MCF 10A (cell line): ENCODE measurements at regions of chr6 and their contacts with region 1.

Region 1: DNA sequence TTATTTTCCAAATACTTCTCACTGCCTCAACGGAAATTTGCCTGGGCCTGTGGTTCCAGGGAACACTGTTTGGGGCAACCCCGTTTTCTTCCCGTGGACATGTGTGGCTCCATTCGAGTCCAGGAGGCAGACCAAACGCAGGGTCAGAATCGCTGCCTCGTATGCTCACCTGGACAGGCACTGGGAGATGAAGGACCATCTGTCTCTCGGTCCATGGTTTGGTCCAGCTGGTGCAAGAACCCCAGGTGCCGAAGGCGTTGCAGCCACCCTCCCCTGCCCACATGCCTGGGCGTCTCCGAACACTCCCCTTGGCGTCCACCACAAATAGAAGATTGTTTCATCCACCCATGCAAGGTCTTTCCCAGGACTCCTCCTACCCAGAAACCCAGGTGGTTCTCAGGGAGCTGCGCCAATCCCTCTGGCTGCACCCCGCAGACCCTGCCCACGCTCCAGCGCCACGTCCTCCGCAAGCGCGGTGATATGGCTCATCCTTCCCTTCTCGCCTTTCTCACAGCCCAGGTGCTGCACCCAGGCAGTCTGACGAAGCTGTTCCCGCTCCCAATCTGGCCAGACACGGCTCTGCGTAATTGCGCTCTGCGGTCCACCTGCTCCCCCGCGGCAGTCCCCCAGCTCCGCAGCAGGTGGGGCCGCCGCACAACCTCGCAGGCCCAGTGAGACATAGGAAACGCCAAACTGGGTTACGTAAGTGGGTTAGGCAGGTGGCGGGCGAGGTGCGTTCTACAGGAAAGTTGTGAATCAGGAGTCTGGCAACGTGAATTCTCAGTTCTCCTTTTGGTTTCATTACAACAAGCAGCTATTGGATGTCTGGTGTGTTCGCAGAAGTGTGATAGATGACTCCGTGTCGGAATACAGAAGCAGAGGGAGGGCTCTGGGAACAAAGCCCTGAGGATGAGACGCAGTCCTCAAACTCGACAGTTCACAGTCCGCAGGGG is 146.2 kb upstream of the ECI2 start:
- DNase-seq: peak; percentile 90
- H3K4me3 Mint-ChIP-seq: peak overlapping the region; percentile 75
- H3K27ac Mint-ChIP-seq: peak overlapping the region; percentile 86
- H3K4me1 Mint-ChIP-seq: peaks cover 23% of the 10 kb centered on the region
- H3K27me3 Mint-ChIP-seq: no peaks in the 10 kb centered on the region
- CTCF ChIP-seq: peak; percentile 37

Region 2: DNA sequence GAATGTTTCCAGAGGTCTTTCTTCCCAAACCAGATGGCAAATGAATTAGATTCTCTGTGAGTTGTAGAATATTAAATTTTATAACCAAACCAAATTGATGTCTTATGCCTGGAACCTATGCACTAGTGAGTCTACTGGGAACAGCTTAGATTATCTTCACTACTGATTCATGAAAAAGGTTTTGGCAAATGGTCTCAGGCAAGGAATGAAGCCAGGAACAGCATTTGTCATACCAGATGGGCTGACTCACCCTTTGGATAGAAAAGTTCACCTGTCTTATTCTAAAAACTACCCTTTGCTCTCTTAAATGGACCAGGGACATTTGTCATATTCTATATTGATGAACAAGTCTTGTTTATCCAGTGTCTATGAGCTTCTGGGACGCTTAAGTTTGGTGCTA is 10.8 kb before region 1 on chr6:
- CTCF ChIA-PET with region 1: interaction called, 4 read pairs
- POLR2A ChIA-PET with region 1: interaction called, 18 read pairs
- intact Hi-C with region 1: no loop called
- DNase-seq: peak; percentile 71
- H3K4me3 Mint-ChIP-seq: no peak overlapping the region
- H3K27ac Mint-ChIP-seq: no peak overlapping the region
- H3K4me1 Mint-ChIP-seq: peaks cover 10% of the 10 kb centered on the region
- H3K27me3 Mint-ChIP-seq: peaks cover 13% of the 10 kb centered on the region
- CTCF ChIP-seq: no peak